GM18951 (cell line): ENCODE measurements at regions of chr20 and their contacts with region 1.

Region 1: DNA sequence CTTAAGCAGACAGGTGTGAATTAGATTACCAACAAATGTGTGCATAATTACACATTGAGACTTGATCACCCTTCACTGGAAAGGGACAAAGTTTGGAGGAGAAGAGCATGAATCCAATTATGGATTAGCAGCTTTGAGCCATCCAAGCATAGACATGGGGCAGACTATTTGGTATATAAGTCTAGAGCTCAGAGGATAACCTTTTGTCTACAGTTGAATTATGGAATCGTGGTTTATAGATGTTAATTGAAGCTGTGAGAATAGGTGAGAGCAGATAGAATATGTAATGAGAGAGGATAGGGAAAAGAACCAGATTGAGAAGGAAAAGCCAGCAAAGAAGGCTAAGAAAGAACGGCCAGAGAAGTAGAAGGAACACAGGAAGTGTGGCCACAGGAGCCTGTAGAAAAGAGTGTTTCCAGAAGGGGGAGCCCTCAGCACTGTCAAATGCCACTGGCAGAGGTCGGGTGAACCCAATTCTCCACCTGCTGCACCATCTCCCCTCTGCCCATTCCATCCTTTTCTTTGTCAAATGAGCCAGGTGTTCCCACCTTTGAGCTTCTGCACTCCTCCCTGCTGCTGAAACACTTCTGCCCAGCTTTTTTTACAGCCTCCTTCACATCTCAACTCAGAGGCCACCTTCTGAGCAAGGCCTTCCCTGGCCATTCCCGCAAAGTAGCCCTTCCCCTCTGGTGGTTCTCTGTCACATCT is 7.3 kb downstream of the DNTTIP1 start:
- POLR2A ChIP-seq: no peak

Region 2: GRCh38 chr20:45347936-45348778 is 450.9 kb before region 1 on chr20 and contains the start of gene SDC4:
- in situ Hi-C with region 1: loop called (anchors 25 kb)
- POLR2A ChIP-seq: peak; percentile 75